CD8-positive, alpha-beta memory T cell (primary cell): ENCODE measurements at regions of chr9 and their contacts with region 1.

Region 1: GRCh38 chr9:98074115-98074990 is 17.8 kb downstream of the NANS start:
- DNase-seq: peak; percentile 51 to 80 (median 60)
- H3K4me3 ChIP-seq: no peak overlapping the region
- H3K4me3 Mint-ChIP-seq: peak overlapping the region in 6 of 7 donors; percentile 54 to 79 (median 65)
- H3K27ac ChIP-seq: no peak overlapping the region
- H3K27ac Mint-ChIP-seq: peak overlapping the region; percentile 79 to 99 (median 92)
- H3K4me1 ChIP-seq: peaks cover 33% of the 10 kb centered on the region
- H3K4me1 Mint-ChIP-seq: peaks cover 26 to 36% (median 30%) of the 10 kb centered on the region in 3 donors
- H3K27me3 ChIP-seq: no peaks in the 10 kb centered on the region
- H3K27me3 Mint-ChIP-seq: no peaks in the 10 kb centered on the region

Region 2: DNA sequence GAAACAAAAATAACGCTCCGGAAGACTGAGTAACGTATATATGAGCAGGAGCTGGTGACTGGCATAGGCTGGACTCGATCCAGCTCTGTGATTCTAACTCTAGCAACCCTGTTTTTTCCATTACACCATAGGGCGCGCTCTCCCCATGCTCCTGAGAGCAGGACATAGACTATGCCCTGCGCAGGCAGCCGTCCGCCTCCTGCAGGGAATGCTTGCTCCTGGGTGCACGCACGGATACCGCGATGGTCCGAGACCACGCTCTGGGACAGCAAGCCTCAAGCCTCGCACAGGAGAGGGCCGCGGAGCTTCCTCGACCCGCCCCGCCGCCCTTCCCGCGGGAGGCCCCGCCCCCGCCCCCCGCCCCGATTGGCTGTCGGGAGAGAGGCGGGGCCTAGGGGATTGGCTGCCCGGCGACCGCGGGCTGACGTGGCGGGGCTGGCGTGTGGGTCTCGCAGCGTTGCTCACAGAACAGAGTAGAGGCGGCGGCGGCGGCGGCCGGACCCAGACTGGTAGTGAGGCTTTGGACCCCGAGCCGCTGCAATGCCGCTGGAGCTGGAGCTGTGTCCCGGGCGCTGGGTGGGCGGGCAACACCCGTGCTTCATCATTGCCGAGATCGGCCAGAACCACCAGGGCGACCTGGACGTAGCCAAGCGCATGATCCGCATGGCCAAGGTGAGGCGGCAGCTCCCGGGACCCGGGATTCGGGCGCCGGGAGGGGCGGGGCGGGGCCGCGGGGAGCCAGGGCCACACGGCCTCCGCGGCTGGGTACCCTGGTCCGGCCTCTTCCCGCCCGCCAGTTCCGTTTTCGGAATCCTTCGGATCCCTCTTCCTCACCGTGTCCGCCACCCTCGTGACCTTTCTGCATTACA is 17.9 kb before region 1 on chr9 and contains the start of gene NANS:
- CTCF ChIA-PET with region 1: interaction called, 24 read pairs
- POLR2A ChIA-PET with region 1: no interaction called
- DNase-seq: peak; percentile 87 to 94 (median 88)
- H3K4me3 ChIP-seq: peak within 1 kb of the TSS; percentile 76
- H3K4me3 Mint-ChIP-seq: peak within 1 kb of the TSS; percentile 94 to 99 (median 96)
- H3K27ac ChIP-seq: peak within 1 kb of the TSS; percentile 72
- H3K27ac Mint-ChIP-seq: peak within 1 kb of the TSS; percentile 91 to 99 (median 96)
- H3K4me1 ChIP-seq: peaks cover 16% of the 10 kb centered on the region
- H3K4me1 Mint-ChIP-seq: peaks cover 18 to 32% (median 30%) of the 10 kb centered on the region in 3 donors
- H3K27me3 ChIP-seq: no peaks in the 10 kb centered on the region
- H3K27me3 Mint-ChIP-seq: no peaks in the 10 kb centered on the region
- total RNA-seq, gene NANS: 33.2 to 34.8 TPM

Region 3: DNA sequence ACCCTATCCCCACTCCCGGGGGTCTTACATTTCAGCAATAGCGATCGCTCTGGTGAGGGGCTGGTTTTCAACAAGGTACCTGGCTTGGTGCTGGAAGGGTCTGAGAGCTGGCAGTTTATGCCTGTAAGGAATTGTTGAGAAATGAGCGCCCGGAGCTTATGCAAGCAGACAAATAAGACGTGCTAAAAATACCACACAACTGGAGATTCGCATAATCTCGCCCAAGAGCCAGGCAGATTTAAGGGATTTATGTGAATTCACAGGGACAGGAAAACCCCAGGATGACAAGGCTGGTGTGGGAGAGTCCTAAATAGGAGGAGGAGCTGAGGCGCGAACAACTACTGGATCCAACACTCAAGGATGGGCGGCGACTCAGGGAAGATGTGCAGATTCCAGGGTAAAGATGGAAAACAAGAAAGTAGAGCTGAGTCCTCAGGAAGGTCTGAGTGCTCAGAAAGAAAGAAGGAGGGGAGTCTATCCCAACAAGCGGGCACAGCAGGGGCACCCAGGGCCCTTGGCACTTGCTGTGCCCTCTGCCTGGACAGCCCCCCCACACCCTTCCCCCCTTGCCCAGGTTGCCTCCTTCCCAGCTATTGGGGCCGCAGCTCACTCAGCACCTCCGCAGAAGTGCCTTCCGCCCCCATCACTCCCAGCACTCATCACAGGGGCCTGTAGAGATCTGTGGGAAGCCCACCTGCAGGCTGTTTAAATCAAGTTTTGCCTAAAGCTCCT is 17.7 kb after region 1 on chr9:
- CTCF ChIA-PET with region 1: interaction called, 18 read pairs
- POLR2A ChIA-PET with region 1: no interaction called
- DNase-seq: no peak
- H3K4me3 ChIP-seq: no peak overlapping the region
- H3K4me3 Mint-ChIP-seq: no peak overlapping the region
- H3K27ac ChIP-seq: no peak overlapping the region
- H3K27ac Mint-ChIP-seq: peak overlapping the region in 7 of 8 donors; percentile 4 to 90 (median 42)
- H3K4me1 ChIP-seq: peaks cover 11% of the 10 kb centered on the region
- H3K4me1 Mint-ChIP-seq: peaks cover 32 to 57% (median 46%) of the 10 kb centered on the region in 3 donors
- H3K27me3 ChIP-seq: no peaks in the 10 kb centered on the region
- H3K27me3 Mint-ChIP-seq: no peaks in the 10 kb centered on the region

Region 4: GRCh38 chr9:98101868-98102273 is 27.5 kb after region 1 on chr9:
- CTCF ChIA-PET with region 1: interaction called, 12 read pairs
- POLR2A ChIA-PET with region 1: interaction called, 6 read pairs
- DNase-seq: peak; percentile 66 to 92 (median 90)
- H3K4me3 ChIP-seq: peak overlapping the region; percentile 23
- H3K4me3 Mint-ChIP-seq: peak overlapping the region; percentile 65 to 87 (median 78)
- H3K27ac ChIP-seq: no peak overlapping the region
- H3K27ac Mint-ChIP-seq: peak overlapping the region; percentile 93 to 99 (median 96)
- H3K4me1 ChIP-seq: peaks cover 95% of the 10 kb centered on the region
- H3K4me1 Mint-ChIP-seq: peaks cover 78 to 96% (median 95%) of the 10 kb centered on the region in 3 donors
- H3K27me3 ChIP-seq: no peaks in the 10 kb centered on the region
- H3K27me3 Mint-ChIP-seq: no peaks in the 10 kb centered on the region

Region 5: DNA sequence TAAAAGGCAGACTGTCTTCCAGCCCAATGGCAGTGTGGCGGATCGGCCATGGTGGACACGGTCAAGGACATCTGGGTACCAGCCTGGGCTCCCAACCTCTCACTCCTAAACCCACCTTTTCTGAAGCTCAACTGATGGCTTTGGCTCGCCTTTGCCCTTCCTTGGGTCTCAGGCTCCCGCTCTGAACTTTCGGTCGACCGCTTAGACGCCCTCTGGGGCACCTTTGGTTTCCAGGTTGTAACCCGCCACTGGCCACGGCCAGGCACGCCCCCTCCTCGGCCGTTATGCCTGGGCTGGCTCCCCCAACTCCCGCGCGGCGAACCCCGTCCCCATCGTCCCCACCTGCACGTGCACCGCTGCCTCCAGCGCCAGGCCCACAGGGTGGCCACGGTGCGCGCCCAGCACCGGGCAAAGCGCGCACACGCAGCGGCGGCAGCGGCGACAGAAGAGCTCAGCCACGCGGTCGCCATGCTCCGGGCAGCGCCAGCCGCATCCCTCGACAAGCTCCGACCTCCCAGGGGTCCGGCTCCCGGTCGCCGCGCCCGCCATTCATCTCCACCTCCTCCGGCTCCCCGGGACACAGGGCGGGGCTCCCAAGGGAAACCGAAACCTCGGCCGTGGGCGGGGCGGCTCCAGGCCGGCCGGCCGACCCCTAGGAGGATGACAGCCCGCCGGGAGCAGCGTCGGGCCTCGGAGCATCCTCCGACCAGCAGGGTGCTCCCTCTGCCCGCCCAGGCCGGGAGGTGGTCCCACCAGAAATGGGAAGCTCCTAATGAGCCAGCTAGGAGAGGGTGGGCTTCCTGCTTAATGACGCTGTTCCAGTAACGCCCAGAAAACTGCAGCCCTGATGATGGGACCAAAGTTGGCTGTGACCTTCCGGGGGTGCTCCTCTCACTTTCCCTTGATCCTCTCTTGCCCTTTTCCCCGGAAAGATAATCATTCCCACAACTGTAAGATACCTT is 44.6 kb after region 1 on chr9 and contains the start of gene TRIM14:
- CTCF ChIA-PET with region 1: interaction called, 15 read pairs
- POLR2A ChIA-PET with region 1: interaction called, 3 read pairs
- DNase-seq: peak; percentile 46 to 73 (median 58)
- H3K4me3 ChIP-seq: peak within 1 kb of the TSS; percentile 95
- H3K4me3 Mint-ChIP-seq: peak within 1 kb of the TSS; percentile 86 to 95 (median 90)
- H3K27ac ChIP-seq: peak within 1 kb of the TSS; percentile 59
- H3K27ac Mint-ChIP-seq: peak within 1 kb of the TSS; percentile 85 to 99 (median 96)
- H3K4me1 ChIP-seq: peaks cover 43% of the 10 kb centered on the region
- H3K4me1 Mint-ChIP-seq: peaks cover 45 to 70% (median 61%) of the 10 kb centered on the region in 3 donors
- H3K27me3 ChIP-seq: no peaks in the 10 kb centered on the region
- H3K27me3 Mint-ChIP-seq: no peaks in the 10 kb centered on the region
- total RNA-seq, gene TRIM14: 46.2 to 52.1 TPM

Region 6: DNA sequence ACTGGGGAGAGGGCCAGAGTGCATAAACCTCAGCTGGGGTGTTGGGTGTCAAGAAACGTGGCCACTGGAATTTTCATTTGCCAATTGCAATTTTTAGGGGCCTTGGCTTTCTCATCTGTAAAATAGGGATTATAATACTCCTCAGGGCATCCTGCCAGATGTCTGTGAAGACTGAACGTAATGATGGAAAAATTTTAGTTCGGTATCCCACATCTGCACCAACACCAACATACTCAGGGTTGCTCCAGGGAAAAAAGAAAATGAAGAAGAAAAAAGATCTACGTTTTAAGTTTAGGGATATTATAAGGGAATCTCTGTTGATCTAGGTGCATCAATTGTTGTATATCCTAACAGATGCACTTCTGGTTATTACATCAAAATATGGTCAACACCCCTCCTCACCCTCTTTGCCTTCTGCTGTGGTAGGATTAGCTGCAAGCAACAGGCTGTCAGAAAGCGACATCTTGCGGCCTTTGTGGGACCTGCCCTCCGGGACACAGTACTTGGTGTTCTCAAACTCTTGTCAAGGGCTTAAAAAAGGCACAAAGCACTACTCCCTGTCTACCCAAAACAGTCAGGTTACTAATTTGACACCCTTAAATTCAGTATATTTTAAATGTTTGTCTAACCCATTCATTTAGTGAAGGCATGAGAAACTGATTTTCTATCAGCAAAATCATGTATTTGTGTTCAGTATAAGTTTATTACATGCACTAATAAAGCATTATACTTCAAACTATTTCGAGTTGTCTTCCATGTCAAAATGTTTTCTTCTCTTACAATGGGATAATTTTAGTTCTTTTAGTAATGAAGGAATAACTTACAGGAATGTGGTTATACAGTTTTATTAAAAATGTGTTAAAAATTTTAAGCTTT is 189.4 kb after region 1 on chr9:
- CTCF ChIA-PET with region 1: interaction called, 39 read pairs
- POLR2A ChIA-PET with region 1: no interaction called
- DNase-seq: peak; percentile 69 to 88 (median 71)
- H3K4me3 ChIP-seq: no peak overlapping the region
- H3K4me3 Mint-ChIP-seq: peak overlapping the region in 1 of 7 donors; percentile 5
- H3K27ac ChIP-seq: no peak overlapping the region
- H3K27ac Mint-ChIP-seq: peak overlapping the region in 1 of 8 donors; percentile 70
- H3K4me1 ChIP-seq: no peaks in the 10 kb centered on the region
- H3K4me1 Mint-ChIP-seq: peaks cover 0 to 2% (median 0%) of the 10 kb centered on the region in 3 donors
- H3K27me3 ChIP-seq: no peaks in the 10 kb centered on the region
- H3K27me3 Mint-ChIP-seq: peaks cover 2 to 14% of the 10 kb centered on the region in 2 donors